PC-9 (cell line): ENCODE measurements at regions of chr16 and their contacts with region 1.

Region 1: GRCh38 chr16:48526058-48526957 is 83.7 kb downstream of the N4BP1 start:
- DNase-seq: peak; percentile 71 to 74
- H3K4me3 ChIP-seq: no peak overlapping the region
- H3K27ac ChIP-seq: no peak overlapping the region
- H3K4me1 ChIP-seq: peaks cover 22% of the 10 kb centered on the region
- H3K27me3 ChIP-seq: no peaks in the 10 kb centered on the region
- CTCF ChIP-seq: peak; percentile 77

Region 2: DNA sequence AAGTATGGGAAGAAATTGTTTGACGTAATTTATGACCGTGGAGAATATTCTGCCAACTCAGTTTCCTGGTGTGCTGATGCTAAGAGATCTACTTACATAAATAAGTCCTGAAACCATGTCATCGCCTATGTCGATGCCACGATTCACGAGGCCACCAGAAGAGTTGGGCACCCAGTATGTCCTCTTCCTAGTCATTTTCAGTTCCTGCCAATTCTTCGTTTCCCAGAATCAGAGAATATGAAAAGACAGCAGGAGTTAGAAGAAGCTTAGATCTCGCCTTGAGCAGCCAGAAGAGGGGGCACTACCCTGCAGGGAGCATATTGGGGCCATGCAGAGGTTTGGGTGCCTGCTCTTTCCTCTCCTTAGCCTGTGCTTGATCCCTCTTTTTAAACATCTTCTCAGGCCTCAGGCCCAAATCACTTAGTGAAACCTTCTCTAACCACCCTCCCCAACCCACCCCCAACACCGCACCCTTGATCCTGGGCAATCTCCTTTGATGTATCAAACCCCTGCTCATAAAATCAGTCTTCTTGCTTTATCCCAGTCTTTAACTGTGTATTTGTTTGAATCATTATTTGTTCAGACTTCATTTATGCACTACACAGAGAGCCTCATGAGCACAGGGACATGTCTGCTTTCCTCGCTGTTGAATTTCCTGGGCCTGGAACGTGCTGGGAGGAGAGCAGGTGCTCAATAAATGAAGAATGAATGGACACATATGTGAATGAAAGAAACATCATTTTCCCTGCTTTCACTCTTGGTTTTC is 294.4 kb before region 1 on chr16:
- CTCF ChIA-PET with region 1: no interaction called
- POLR2A ChIA-PET with region 1: no interaction called
- intact Hi-C with region 1: loop called (anchors 5 kb)
- DNase-seq: peak in 1 of 2 experiments; percentile 29
- H3K4me3 ChIP-seq: no peak overlapping the region
- H3K27ac ChIP-seq: no peak overlapping the region
- H3K4me1 ChIP-seq: 0 out of 2 replicates have a peak, but pooled peaks cover 6% of the 10 kb centered on the region
- H3K27me3 ChIP-seq: no peaks in the 10 kb centered on the region
- CTCF ChIP-seq: peak; percentile 56

Region 3: DNA sequence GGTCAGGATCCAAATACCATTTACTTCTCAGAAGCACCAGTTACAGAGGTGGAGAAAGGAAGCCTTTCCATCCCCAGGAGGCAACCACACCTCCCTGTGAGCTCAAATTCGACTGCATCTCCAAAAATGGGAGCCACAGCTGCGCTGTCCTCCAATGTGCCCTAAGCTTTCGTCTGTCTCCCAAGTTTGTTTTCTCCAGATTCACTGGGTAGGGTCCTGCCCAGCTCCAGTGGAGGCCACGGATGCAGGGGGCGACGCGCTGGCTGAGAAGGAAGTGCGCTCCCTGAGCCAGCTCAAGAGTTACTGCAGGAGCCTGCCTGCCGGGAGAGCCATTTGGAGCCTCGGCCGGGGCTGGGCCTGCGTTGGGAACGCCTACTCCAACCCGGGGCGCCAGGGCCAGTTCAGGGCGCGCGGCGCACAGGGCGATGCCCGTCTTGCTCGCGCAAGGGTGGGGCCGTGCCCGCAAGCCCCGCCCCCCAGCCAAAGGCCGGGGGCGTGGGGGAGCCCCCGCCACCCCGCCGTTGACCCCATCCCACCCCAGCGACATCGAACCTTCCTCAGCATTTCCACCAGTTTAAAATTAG is 160.6 kb before region 1 on chr16:
- CTCF ChIA-PET with region 1: no interaction called
- POLR2A ChIA-PET with region 1: interaction called, 4 read pairs
- intact Hi-C with region 1: loop called (anchors 5 kb)
- DNase-seq: peak; percentile 77 to 92
- H3K4me3 ChIP-seq: peak overlapping the region; percentile 73
- H3K27ac ChIP-seq: peak overlapping the region; percentile 100
- H3K4me1 ChIP-seq: peaks cover 37% of the 10 kb centered on the region
- H3K27me3 ChIP-seq: no peaks in the 10 kb centered on the region
- CTCF ChIP-seq: no peak